PC-3 (cell line): ENCODE measurements at regions of chr3 and their contacts with region 1.

Region 1: GRCh38 chr3:57007513-57008460 is 52.7 kb upstream of the SPATA12 start:
- DNase-seq: peak; percentile 83
- ATAC-seq: peak; percentile 92
- H3K4me3 ChIP-seq: peak overlapping the region; percentile 45; the same call in 1 of the 2 replicates
- H3K27ac ChIP-seq: peak overlapping the region; percentile 90
- H3K4me1 ChIP-seq: peaks cover 30% of the 10 kb centered on the region
- H3K27me3 ChIP-seq: no peaks in the 10 kb centered on the region
- CTCF ChIP-seq: no peak

Region 2: GRCh38 chr3:57078344-57078634 is 70.5 kb after region 1 on chr3:
- CTCF ChIA-PET with region 1: no interaction called
- POLR2A ChIA-PET with region 1: no interaction called
- intact Hi-C with region 1: loop called (anchors 1 kb)
- DNase-seq: peak; percentile 47
- ATAC-seq: peak; percentile 43
- H3K4me3 ChIP-seq: peak overlapping the region; percentile 99
- H3K27ac ChIP-seq: no peak overlapping the region
- H3K4me1 ChIP-seq: peaks cover 6% of the 10 kb centered on the region
- H3K27me3 ChIP-seq: no peaks in the 10 kb centered on the region
- CTCF ChIP-seq: no peak

Region 3: GRCh38 chr3:57179580-57180410 is 172.0 kb after region 1 on chr3:
- CTCF ChIA-PET with region 1: no interaction called
- POLR2A ChIA-PET with region 1: no interaction called
- intact Hi-C with region 1: no loop called
- DNase-seq: peak; percentile 59
- ATAC-seq: peak; percentile 93
- H3K4me3 ChIP-seq: no peak overlapping the region
- H3K27ac ChIP-seq: no peak overlapping the region
- H3K4me1 ChIP-seq: no peaks in the 10 kb centered on the region
- H3K27me3 ChIP-seq: no peaks in the 10 kb centered on the region
- CTCF ChIP-seq: peak; percentile 67